Left colon (tissue), 2 donors: ENCODE measurements at regions of chr1 and their contacts with region 1.

Region 1: GRCh38 chr1:8238851-8239305 is 79.0 kb upstream of the SLC45A1 start:
- DNase-seq: peak; percentile 46 to 58
- ATAC-seq: peak; percentile 62

Region 2: GRCh38 chr1:8031176-8031785 is 207.6 kb before region 1 on chr1:
- intact Hi-C with region 1: loop called in 1 of 2 experiments (anchors 10 kb)
- DNase-seq: no peak
- ATAC-seq: no peak

Region 3: GRCh38 chr1:8061210-8061609 is 177.7 kb before region 1 on chr1:
- intact Hi-C with region 1: no loop called
- DNase-seq: no peak
- ATAC-seq: peak; percentile 93